ENCODE measurements at regions of chr10 and their contacts with region 1.

Region 1: DNA sequence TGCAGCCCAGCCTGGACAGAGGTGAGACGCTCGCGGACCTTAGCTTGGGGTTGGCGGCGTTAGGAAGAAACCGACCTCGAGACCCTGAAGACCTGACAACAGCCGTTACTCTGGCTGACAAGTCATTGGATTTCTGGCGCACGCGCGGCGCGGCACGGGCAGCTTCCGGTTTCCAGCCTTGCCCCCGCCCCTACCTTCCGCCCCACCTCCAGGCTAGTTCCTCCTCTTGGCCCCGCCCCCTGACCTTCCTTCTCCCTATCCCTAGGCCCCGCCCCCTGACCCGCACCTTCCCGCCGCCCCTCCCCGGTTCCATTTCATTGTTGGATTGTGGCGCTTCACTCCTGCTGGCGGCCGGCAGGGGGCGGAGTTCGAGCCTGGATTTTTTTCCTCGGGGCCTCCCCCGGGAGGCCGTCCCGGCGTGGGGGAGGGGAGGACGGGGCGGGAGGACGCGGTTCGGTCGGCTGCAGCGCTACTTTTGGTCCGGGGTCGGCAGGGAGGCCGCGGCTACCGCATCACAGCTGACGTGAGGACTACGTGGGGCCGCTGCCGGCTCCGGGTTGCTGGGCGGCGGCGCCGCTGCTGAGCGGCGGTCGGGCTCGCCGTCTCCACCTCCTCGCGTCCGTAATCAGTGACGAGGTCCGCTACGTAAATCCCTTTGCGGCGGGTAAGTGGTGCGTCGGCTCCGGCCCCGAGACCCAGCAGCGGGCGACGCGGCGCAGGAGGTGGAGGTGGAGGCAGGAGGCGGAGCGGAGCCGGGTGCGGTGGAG is at the start of gene CREM:
- DNase-seq: peak; percentile 98
- H3K4me3 ChIP-seq: peak within 1 kb of the TSS; percentile 97
- H3K27ac ChIP-seq: peak within 1 kb of the TSS; percentile 100
- H3K4me1 ChIP-seq: peaks cover 29% of the 10 kb centered on the region
- H3K27me3 ChIP-seq: no peaks in the 10 kb centered on the region
- CTCF ChIP-seq: peak; percentile 96
- total RNA-seq, gene CREM: 58.4 and 66.3 TPM in 2 replicates

Region 2: GRCh38 chr10:35184527-35185171 is 57.9 kb after region 1 on chr10:
- CTCF ChIA-PET with region 1: no interaction called
- POLR2A ChIA-PET with region 1: no interaction called
- intact Hi-C with region 1: no loop called
- DNase-seq: no peak
- H3K4me3 ChIP-seq: no peak overlapping the region
- H3K27ac ChIP-seq: no peak overlapping the region
- H3K4me1 ChIP-seq: peaks cover 12% of the 10 kb centered on the region
- H3K27me3 ChIP-seq: no peaks in the 10 kb centered on the region
- CTCF ChIP-seq: no peak

Region 3: GRCh38 chr10:35195361-35196306 is 68.9 kb after region 1 on chr10:
- CTCF ChIA-PET with region 1: interaction called, 38 read pairs
- POLR2A ChIA-PET with region 1: interaction called, 19 read pairs
- intact Hi-C with region 1: loop called (anchors 1 kb)
- DNase-seq: peak; percentile 96
- H3K4me3 ChIP-seq: peak overlapping the region; percentile 49
- H3K27ac ChIP-seq: peak overlapping the region; percentile 97
- H3K4me1 ChIP-seq: peaks cover 16% of the 10 kb centered on the region
- H3K27me3 ChIP-seq: no peaks in the 10 kb centered on the region
- CTCF ChIP-seq: peak; percentile 82

Region 4: GRCh38 chr10:35218339-35218955 is 91.7 kb after region 1 on chr10:
- CTCF ChIA-PET with region 1: interaction called, 5 read pairs
- POLR2A ChIA-PET with region 1: no interaction called
- intact Hi-C with region 1: loop called (anchors 1 kb)
- DNase-seq: peak; percentile 97
- H3K4me3 ChIP-seq: no peak overlapping the region
- H3K27ac ChIP-seq: no peak overlapping the region
- H3K4me1 ChIP-seq: peaks cover 24% of the 10 kb centered on the region
- H3K27me3 ChIP-seq: no peaks in the 10 kb centered on the region
- CTCF ChIP-seq: peak; percentile 91

Region 5: GRCh38 chr10:35563261-35563891 is 436.7 kb after region 1 on chr10:
- CTCF ChIA-PET with region 1: no interaction called
- POLR2A ChIA-PET with region 1: no interaction called
- intact Hi-C with region 1: loop called (anchors 5 kb)
- DNase-seq: peak; percentile 88
- H3K4me3 ChIP-seq: no peak overlapping the region
- H3K27ac ChIP-seq: no peak overlapping the region
- H3K4me1 ChIP-seq: peaks cover 15% of the 10 kb centered on the region
- H3K27me3 ChIP-seq: no peaks in the 10 kb centered on the region
- CTCF ChIP-seq: peak; percentile 100

Region 6: GRCh38 chr10:36888929-36889573 is 1762.3 kb after region 1 on chr10:
- CTCF ChIA-PET with region 1: no interaction called
- POLR2A ChIA-PET with region 1: no interaction called
- intact Hi-C with region 1: loop called (anchors 10 kb)
- DNase-seq: peak; percentile 75
- H3K4me3 ChIP-seq: no peak overlapping the region
- H3K27ac ChIP-seq: no peak overlapping the region
- H3K4me1 ChIP-seq: no peaks in the 10 kb centered on the region
- H3K27me3 ChIP-seq: no peaks in the 10 kb centered on the region
- CTCF ChIP-seq: peak; percentile 63

Measured in A673 (cell line).